ENCODE measurements at regions of chr17 and their contacts with region 1.

Region 1: GRCh38 chr17:75271233-75271954 is 363 bp upstream of the MIF4GD start:
- DNase-seq: peak; percentile 83
- H3K4me3 Mint-ChIP-seq: peak overlapping the region; percentile 76
- H3K27ac Mint-ChIP-seq: peak overlapping the region; percentile 70
- H3K4me1 Mint-ChIP-seq: peaks cover 35% of the 10 kb centered on the region
- H3K27me3 Mint-ChIP-seq: no peaks in the 10 kb centered on the region

Region 2: GRCh38 chr17:75250009-75250471 is 21.4 kb before region 1 on chr17:
- CTCF ChIA-PET with region 1: interaction called, 19 read pairs
- intact Hi-C with region 1: loop called (anchors 1 kb)
- DNase-seq: peak; percentile 90
- H3K4me3 Mint-ChIP-seq: peak overlapping the region; percentile 61
- H3K27ac Mint-ChIP-seq: peak overlapping the region; percentile 93
- H3K4me1 Mint-ChIP-seq: peaks cover 74% of the 10 kb centered on the region
- H3K27me3 Mint-ChIP-seq: no peaks in the 10 kb centered on the region

Region 3: DNA sequence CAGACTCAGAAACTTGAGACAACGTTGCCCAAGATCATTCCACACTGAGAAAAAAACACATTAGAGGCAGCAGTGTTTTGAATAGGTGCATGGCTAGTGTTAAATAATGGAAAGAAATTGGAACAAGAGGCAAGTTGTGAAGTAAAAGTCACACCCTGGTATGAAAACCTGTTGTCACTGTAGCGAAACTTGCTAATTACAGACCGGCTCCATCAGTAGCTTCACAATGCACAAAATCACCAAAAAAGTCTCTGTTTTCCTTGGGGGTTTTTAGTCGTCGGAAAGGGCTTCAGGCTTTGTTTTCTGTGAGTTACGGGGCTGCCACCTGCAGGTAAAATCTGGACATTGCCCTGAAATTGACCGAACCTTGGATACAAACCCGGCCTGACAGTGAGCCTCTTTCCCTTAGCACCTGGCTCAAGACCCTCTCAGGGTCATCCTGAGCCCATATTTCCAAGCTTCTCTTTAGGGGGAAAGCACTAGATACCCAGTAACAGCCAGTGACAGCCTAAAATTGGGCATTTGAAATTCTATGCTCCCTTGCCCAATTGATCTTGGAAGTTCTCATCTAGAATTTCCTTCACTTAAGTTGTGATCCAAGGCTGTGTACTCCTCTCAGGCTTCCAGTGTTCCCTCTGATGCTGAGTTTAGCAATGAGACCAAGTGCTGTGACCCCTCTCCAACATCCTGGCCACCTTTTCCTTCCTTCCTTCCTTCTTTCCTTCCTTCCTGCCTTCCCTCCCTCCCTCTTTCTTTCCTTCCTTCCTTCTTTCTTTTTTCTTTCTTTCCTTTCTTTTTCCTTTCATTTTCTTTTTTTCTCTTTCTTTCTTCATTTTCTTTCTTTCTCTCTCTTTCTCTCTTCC is 141.3 kb after region 1 on chr17:
- CTCF ChIA-PET with region 1: interaction called, 14 read pairs
- intact Hi-C with region 1: no loop called
- DNase-seq: peak; percentile 87
- H3K4me3 Mint-ChIP-seq: peak overlapping the region; percentile 37
- H3K27ac Mint-ChIP-seq: no peak overlapping the region
- H3K4me1 Mint-ChIP-seq: peaks cover 18% of the 10 kb centered on the region
- H3K27me3 Mint-ChIP-seq: no peaks in the 10 kb centered on the region

Region 4: DNA sequence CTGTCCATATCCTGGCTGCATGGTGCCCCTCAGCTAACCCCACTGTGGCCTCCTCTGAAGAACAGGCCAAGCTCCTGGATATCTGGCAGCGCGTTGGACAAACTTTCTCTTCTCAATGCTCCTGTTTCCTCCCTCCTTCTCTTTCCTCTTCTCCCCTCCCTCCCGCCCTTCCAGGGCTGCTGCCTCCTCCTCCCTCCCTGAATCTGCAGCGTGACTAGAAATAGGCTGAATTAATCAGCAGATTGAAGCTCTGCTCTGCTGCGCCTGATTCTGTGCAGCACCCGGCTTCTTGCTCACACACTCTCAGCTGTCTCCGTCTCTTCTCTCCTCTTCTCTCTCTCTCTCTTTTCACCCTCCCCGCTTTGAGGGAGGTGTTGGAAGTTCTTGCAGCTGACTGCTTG is 204.9 kb after region 1 on chr17:
- CTCF ChIA-PET with region 1: no interaction called
- intact Hi-C with region 1: no loop called
- DNase-seq: no peak
- H3K4me3 Mint-ChIP-seq: no peak overlapping the region
- H3K27ac Mint-ChIP-seq: no peak overlapping the region
- H3K4me1 Mint-ChIP-seq: no peaks in the 10 kb centered on the region
- H3K27me3 Mint-ChIP-seq: no peaks in the 10 kb centered on the region